ENCODE measurements at regions of chr13 and their contacts with region 1.

Region 1: DNA sequence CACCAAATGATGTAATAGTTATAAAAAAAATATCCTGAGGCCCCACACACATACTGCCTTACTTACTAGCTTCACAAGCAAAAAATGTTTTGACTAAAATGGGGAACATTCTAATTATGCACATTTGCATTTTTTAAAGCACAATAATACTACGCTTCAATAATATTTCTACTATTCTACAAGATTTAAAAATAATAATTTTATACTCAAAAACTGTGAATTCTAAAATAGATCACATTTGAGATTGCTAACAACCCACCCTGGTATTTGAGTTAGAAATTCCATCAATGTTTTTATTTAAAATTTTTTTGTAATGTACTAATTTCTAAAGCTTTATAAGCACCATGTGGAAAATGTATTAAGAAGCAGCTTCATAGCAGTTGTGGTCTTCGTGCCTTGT is 24.2 kb downstream of the CCDC169 start:
- DNase-seq: no peak
- H3K4me3 ChIP-seq: no peak overlapping the region
- H3K27ac ChIP-seq: no peak overlapping the region
- H3K4me1 ChIP-seq: no peaks in the 10 kb centered on the region
- H3K27me3 ChIP-seq: no peaks in the 10 kb centered on the region
- CTCF ChIP-seq: no peak
- POLR2A ChIP-seq: no peak

Region 2: GRCh38 chr13:35630551-35631275 is 642.7 kb before region 1 on chr13:
- intact Hi-C with region 1: no loop called
- DNase-seq: no peak
- H3K4me3 ChIP-seq: no peak overlapping the region
- H3K27ac ChIP-seq: no peak overlapping the region
- H3K4me1 ChIP-seq: no peaks in the 10 kb centered on the region
- H3K27me3 ChIP-seq: no peaks in the 10 kb centered on the region
- CTCF ChIP-seq: peak in 2 of 3 donors; percentile 25 to 54
- POLR2A ChIP-seq: no peak

Region 3: GRCh38 chr13:36124236-36124822 is 149.1 kb before region 1 on chr13:
- intact Hi-C with region 1: loop called (anchors 2 kb)
- DNase-seq: peak in 1 of 2 donors; percentile 45
- H3K4me3 ChIP-seq: peak overlapping the region in 1 of 3 donors; percentile 30
- H3K27ac ChIP-seq: peak overlapping the region in 1 of 2 donors; percentile 15
- H3K4me1 ChIP-seq: peaks cover 0 to 13% of the 10 kb centered on the region in 2 donors
- H3K27me3 ChIP-seq: no peaks in the 10 kb centered on the region
- CTCF ChIP-seq: no peak
- POLR2A ChIP-seq: no peak

Measured in breast epithelium (tissue), 4 donors.